GM23248 (cell line): ENCODE measurements at regions of chr18 and their contacts with region 1.

Region 1: DNA sequence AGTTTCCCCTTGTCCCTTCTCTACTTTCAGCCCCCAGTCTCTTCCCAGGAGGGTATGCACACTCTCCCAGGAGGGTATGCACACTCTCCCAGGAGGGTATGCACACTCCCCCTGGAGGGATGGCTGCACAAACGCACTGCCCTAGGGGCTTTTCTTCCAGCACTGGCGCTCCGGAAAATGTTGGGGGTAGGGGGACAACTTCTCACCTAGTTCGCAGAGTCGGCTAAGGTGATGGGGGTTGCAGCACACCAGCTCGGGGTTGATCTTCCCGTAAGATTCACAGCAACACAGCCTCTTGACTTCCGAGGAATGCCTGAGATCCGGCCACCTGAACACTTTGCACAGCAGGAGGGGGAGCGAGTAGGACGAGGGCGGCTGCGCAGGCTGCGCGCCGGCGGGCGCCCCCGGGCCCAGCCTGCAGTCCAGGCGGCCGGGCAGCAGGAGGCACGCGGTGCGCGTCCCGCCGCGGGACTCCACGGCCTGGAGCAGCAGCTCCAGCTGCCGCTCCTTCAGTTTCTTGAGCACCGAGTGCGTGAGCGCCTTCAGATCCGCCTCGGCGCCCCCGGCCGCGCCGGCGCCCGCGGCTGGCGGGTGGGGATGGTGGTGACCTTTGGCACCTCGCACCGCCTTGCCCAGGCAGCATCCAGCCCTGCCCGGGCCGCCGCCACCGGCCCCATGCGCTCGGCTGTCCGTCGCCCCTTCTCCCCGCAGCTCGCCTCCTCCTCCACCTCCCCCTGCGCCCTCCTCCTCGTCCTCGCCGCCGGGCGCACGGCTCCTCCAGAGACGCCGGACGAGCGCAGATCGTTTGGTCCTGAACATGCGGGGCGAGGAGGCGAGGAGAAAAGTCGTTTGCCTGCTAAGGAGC is 927 bp downstream of the SMAD7 start:
- DNase-seq: peak; percentile 74
- H3K4me3 ChIP-seq: peak overlapping the region; percentile 87
- H3K27ac ChIP-seq: peak overlapping the region; percentile 96
- H3K4me1 ChIP-seq: peaks cover 39% of the 10 kb centered on the region
- H3K27me3 ChIP-seq: no peaks in the 10 kb centered on the region

Region 2: DNA sequence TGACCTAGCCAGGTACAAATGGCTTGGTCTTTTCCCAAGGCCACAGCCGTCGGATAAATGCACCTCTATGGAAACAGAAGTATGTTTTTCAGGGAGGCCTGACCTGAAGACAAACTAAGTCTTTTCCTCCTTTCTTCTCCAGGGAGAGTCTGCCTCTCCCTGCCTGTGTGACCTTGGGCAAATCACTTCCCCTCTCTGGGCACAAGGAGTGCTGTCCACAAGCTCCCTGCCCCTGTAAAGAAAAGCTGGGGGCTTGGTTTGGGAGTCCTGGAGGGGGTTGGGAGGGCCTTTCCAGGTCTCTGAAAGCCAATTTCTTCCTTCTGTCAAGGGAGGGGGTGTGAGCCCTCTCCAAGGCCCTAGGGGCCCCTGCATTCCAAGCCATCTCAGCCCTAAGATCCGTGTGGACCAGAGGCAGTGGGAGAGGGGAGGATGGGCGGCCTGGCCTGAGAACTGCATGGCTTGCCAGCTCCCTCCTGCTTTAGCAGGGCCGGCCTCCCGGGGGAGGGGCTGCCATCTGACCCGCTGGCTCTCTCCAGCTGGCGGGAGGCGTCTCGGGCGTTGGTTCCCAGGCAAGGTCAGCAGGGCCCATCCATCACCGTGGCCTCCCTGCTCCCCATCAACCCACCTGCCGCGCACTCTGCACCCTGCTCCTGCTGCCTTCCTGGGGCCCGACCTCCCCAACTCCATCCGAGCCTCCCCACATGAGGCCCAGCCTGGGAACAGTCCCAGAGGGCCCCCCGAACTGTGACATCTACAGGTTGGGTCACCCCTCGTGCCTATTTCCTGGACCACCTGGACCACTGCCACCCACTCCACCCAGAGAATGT is 60.5 kb before region 1 on chr18:
- in situ Hi-C with region 1: no loop called
- DNase-seq: no peak
- H3K4me3 ChIP-seq: no peak overlapping the region
- H3K27ac ChIP-seq: no peak overlapping the region
- H3K4me1 ChIP-seq: no peaks in the 10 kb centered on the region
- H3K27me3 ChIP-seq: no peaks in the 10 kb centered on the region

Region 3: DNA sequence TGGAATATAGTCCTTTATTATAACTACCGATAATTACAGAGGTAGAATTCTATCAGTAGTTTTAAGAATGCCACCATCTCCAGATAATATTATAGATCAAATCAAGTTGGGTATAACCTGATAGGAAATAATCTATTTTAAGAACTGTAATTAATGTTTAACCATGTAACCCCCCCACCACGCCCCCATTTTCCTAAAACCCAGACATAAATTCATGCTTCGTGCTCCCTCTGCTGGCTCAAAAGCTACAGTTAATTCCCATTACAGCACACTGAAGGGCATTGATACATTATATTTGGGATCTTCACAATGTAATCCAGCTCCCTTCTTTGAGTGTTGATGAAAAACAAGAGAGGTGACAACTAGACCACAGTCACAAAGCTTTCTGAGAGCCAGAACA is 228.9 kb after region 1 on chr18:
- in situ Hi-C with region 1: loop called (anchors 10 kb)
- DNase-seq: peak; percentile 58
- H3K4me3 ChIP-seq: no peak overlapping the region
- H3K27ac ChIP-seq: 0 out of 2 replicates have a peak overlapping the region, but pooled peaks have one; percentile 52
- H3K4me1 ChIP-seq: peaks cover 40% of the 10 kb centered on the region
- H3K27me3 ChIP-seq: no peaks in the 10 kb centered on the region

Region 4: GRCh38 chr18:49510393-49511115 is 560.7 kb after region 1 on chr18:
- in situ Hi-C with region 1: no loop called
- DNase-seq: peak; percentile 75
- H3K4me3 ChIP-seq: no peak overlapping the region
- H3K27ac ChIP-seq: no peak overlapping the region
- H3K4me1 ChIP-seq: no peaks in the 10 kb centered on the region
- H3K27me3 ChIP-seq: peaks cover 10% of the 10 kb centered on the region; the same call in 1 of the 2 replicates